ENCODE measurements at regions of chrX and their contacts with region 1.

Region 1: DNA sequence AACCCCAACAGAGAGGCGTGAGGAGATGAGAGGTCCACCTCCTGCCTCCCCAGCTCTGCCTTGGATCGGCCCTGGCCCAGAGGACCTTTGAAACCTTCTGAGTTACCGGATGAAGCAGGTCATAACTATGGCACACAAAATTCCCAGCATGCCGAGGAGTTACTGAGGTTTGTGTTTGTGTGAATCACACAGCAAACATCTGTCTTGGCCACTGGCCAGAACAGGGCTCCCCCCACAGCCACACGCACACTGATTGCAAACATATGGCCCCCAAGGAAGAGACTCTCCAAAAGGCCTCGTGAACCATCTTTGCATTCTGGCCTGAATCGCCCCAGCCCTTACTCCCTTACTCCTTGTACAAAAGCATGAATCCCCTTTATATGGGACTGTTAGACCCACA is 18.9 kb downstream of the RPS4X start:
- DNase-seq: no peak

Region 2: DNA sequence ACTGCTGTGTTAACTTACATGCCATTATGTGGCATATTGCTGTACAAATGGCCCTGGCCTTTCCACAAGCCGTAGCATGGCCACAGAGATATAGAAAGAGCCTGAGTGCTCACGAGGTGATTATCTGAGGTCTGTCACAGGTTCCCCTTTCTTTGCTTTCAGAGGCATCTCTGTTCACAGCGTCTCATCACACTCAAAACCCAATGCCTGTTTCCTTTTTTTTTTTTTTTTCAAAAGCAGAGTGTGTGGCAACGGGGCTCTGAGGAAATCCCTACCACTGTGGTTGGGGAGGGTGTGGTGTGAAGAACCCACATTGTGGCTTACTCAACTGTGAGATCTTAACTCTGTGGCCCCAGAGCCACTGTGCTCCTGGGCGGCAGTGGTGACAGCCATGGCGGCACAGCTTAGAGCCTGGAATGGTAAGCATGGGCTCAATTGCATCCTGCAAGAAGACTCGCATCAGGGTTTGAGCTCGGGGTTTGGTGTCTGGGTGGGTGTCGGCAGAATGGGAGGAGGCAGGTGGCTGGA is 157.3 kb before region 1 on chrX:
- intact Hi-C with region 1: no loop called
- DNase-seq: no peak

Region 3: DNA sequence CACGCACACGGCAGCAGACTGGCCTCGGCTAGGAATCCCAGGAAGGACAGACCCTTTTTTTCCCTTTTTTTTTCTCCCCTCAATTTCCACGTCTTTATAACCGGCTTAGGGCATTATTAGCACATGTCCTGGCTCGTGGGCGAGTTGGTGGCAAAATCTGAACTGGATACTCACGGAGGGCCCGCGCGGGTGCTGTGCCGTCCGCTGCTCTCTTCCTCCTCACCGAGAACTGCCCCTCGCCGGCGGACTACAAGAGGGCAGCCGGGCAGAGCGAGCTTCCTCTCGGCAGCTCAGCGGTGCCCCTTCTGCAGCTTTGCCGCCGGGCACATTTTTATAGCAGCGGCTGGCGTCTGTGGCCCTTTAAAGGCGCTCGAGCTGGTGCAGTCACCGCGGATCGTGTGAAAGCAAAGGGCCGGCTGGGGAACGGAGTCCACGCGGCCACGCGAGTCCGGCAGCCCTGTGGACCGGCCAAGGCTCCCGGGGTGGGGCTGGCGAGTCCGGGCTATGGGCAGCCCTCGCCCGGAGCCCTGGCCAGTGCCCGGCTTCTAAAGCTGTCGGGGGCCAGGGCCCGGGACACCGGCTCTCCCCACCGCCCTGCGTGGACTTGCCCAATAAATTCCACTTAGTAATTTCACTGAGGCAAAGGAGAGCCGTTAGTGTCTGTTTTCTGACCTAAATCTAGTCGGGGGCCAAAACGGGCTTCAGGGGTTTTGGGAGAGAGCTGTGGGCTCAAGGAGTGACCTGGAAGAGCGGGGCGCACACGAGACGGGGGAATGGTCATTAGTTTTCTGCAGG is 48.9 kb after region 1 on chrX:
- intact Hi-C with region 1: loop called in 1 of 2 experiments (anchors 1 kb)
- DNase-seq: peak; percentile 84

Region 4: GRCh38 chrX:74242050-74242449 is 1983.9 kb after region 1 on chrX:
- intact Hi-C with region 1: no loop called
- DNase-seq: no peak

Measured in posterior vena cava (tissue), 2 donors.